Naive thymus-derived CD4-positive, alpha-beta T cell (primary cell): ENCODE measurements at regions of chr6 and their contacts with region 1.

Region 1: DNA sequence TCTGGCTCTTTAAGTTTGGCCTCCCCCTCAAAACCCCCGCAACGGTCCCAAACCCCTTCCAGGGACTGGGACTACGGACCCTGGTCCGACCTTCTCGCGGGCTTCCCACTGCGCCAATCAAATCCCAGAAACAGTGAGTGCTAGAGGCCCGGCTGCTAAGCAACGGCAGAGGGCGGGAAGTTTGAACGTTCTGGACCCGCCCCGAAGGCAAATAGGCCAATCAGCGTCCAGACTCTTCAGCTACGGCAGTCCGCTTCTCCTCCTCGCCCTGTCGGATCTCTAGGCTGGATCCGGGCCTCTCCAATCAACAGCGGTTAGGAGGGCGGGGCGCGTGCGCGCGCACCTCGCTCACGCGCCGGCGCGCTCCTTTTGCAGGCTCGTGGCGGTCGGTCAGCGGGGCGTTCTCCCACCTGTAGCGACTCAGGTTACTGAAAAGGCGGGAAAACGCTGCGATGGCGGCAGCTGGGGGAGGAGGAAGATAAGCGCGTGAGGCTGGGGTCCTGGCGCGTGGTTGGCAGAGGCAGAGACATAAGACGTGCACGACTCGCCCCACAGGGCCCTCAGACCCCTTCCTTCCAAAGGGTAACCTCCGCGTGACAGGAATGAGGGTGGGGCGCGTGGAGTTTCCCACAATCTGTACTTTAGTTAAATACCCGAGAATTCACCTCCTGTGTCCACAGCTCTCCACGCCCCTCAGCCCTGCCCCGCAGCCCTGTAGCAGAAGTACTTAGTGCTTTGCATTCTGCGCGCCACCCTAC is at the start of gene MSH5:
- DNase-seq: peak; percentile 82 to 97 (median 92)
- ATAC-seq: peak; percentile 93
- H3K4me3 ChIP-seq: peak within 1 kb of the TSS; percentile 68
- H3K4me3 Mint-ChIP-seq: peak within 1 kb of the TSS; percentile 86 to 100 (median 98)
- H3K27ac ChIP-seq: peak within 1 kb of the TSS; percentile 69
- H3K27ac Mint-ChIP-seq: peak within 1 kb of the TSS; percentile 83 to 94 (median 90)
- H3K4me1 ChIP-seq: peaks cover 32 to 33% of the 10 kb centered on the region in 2 donors
- H3K4me1 Mint-ChIP-seq: peaks cover 41 to 69% (median 61%) of the 10 kb centered on the region in 7 donors
- H3K27me3 ChIP-seq: no peaks in the 10 kb centered on the region
- H3K27me3 Mint-ChIP-seq: no peaks in the 10 kb centered on the region
- total RNA-seq, gene MSH5: 10.3 to 52.2 (median 11.4) TPM

Region 2: DNA sequence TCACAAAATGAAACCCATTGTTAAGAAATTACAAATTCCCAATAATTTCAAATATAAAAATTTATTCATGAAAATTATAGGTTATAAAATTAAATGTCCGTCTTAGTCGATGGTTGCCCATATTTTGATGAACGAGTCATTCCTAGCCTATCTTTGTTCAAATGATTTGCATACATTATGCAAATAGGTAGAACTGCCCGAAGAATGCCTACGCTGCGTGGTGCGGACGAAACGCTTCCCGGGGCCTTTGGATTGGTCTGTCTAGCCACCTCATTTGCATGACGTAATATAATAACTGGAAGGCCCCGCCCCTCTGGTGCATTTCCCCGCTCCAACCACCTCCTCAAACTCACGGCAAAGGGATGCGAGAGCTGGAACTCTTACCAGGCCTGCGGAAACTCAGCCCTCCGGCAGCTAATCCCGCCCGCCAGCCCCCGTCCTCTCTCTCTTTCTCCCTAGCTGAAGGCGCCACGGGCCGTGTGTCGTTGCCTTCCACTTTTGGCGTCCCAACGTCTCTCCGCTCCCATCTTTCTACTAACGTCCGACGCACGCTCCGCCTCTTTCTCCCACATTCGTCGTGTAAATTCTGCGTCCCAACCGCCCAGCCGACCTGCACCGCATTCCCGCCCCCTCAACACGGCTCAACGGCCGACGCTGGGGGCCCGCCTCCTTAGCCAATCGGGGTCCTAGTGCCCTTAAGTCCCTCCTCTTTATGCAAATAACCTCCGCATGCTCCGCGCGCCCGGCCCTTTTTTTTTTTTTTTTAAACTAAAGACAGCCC is 119.8 kb before region 1 on chr6:
- CTCF ChIA-PET with region 1: interaction called, 3 read pairs
- POLR2A ChIA-PET with region 1: interaction called, 3 read pairs
- intact Hi-C with region 1: loop called in 1 of 2 experiments (anchors 2 kb)
- DNase-seq: peak; percentile 81 to 97 (median 94)
- ATAC-seq: peak; percentile 88
- H3K4me3 ChIP-seq: peak overlapping the region; percentile 90
- H3K4me3 Mint-ChIP-seq: peak overlapping the region; percentile 87 to 97 (median 93)
- H3K27ac ChIP-seq: peak overlapping the region; percentile 96
- H3K27ac Mint-ChIP-seq: peak overlapping the region; percentile 95 to 99 (median 96)
- H3K4me1 ChIP-seq: peaks cover 14 to 23% of the 10 kb centered on the region in 2 donors
- H3K4me1 Mint-ChIP-seq: peaks cover 26 to 60% (median 53%) of the 10 kb centered on the region in 7 donors
- H3K27me3 ChIP-seq: no peaks in the 10 kb centered on the region
- H3K27me3 Mint-ChIP-seq: no peaks in the 10 kb centered on the region

Region 3: DNA sequence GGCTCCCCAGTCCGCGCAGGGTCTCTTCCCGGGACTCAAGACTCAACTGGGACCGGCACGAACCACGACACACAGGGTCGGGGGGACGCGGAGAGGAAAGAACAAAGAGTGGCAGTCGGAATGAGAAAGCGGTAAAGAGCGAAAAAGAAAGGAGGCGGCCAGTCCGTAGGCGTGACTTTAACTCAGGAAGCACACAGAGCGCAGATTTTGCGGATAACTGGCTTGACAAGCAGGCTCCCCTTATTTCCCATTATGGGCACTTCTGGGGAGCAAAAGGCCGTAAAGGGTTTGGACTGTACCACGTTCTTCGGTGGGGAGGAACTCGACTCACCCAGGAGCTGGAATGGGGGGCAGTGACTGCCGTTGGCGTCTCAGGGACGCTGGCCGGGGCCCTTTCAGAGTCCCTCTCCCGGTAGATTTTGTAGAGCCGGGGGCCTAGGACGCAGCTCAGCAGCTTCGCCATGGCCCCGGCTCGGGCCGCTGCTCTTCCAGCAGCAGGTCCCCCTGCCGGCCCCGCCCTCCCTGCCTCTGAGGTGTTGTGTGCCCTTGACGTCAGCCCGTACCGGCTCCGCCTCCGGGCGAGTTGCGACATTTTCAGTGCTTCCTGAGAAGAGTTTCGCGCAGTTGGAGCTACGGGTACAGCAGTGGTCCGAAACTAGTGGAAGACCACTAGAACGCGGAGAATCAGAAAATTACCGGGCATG is 36.8 kb before region 1 on chr6 and contains the start of gene ABHD16A:
- CTCF ChIA-PET with region 1: no interaction called
- POLR2A ChIA-PET with region 1: interaction called, 5 read pairs
- intact Hi-C with region 1: loop called (anchors 1 kb)
- DNase-seq: peak; percentile 93 to 97 (median 96)
- ATAC-seq: peak; percentile 95
- H3K4me3 ChIP-seq: peak within 1 kb of the TSS; percentile 98
- H3K4me3 Mint-ChIP-seq: peak within 1 kb of the TSS; percentile 92 to 100 (median 98)
- H3K27ac ChIP-seq: peak within 1 kb of the TSS; percentile 98
- H3K27ac Mint-ChIP-seq: peak within 1 kb of the TSS; percentile 95 to 98 (median 97)
- H3K4me1 ChIP-seq: peaks cover 21 to 28% of the 10 kb centered on the region in 2 donors
- H3K4me1 Mint-ChIP-seq: peaks cover 16 to 39% (median 31%) of the 10 kb centered on the region in 7 donors
- H3K27me3 ChIP-seq: no peaks in the 10 kb centered on the region
- H3K27me3 Mint-ChIP-seq: peaks cover 0 to 2% (median 0%) of the 10 kb centered on the region in 5 donors
- total RNA-seq, gene ABHD16A: 60.1 to 71.7 (median 65.2) TPM

Region 4: GRCh38 chr6:31795616-31796298 is 55.9 kb after region 1 on chr6 and contains the start of gene VARS1:
- CTCF ChIA-PET with region 1: interaction called, 11 read pairs
- POLR2A ChIA-PET with region 1: interaction called, 8 read pairs
- intact Hi-C with region 1: loop called (anchors 1 to 2 kb)
- DNase-seq: peak; percentile 75 to 92 (median 85)
- ATAC-seq: peak; percentile 96
- H3K4me3 ChIP-seq: peak within 1 kb of the TSS; percentile 76
- H3K4me3 Mint-ChIP-seq: peak within 1 kb of the TSS; percentile 85 to 99 (median 96)
- H3K27ac ChIP-seq: peak within 1 kb of the TSS; percentile 93
- H3K27ac Mint-ChIP-seq: peak within 1 kb of the TSS; percentile 80 to 99 (median 98)
- H3K4me1 ChIP-seq: peaks cover 24 to 32% of the 10 kb centered on the region in 2 donors
- H3K4me1 Mint-ChIP-seq: peaks cover 12 to 55% (median 36%) of the 10 kb centered on the region in 7 donors
- H3K27me3 ChIP-seq: no peaks in the 10 kb centered on the region
- H3K27me3 Mint-ChIP-seq: no peaks in the 10 kb centered on the region
- total RNA-seq, gene VARS1: 34.3 to 84.2 (median 53.2) TPM

Region 5: DNA sequence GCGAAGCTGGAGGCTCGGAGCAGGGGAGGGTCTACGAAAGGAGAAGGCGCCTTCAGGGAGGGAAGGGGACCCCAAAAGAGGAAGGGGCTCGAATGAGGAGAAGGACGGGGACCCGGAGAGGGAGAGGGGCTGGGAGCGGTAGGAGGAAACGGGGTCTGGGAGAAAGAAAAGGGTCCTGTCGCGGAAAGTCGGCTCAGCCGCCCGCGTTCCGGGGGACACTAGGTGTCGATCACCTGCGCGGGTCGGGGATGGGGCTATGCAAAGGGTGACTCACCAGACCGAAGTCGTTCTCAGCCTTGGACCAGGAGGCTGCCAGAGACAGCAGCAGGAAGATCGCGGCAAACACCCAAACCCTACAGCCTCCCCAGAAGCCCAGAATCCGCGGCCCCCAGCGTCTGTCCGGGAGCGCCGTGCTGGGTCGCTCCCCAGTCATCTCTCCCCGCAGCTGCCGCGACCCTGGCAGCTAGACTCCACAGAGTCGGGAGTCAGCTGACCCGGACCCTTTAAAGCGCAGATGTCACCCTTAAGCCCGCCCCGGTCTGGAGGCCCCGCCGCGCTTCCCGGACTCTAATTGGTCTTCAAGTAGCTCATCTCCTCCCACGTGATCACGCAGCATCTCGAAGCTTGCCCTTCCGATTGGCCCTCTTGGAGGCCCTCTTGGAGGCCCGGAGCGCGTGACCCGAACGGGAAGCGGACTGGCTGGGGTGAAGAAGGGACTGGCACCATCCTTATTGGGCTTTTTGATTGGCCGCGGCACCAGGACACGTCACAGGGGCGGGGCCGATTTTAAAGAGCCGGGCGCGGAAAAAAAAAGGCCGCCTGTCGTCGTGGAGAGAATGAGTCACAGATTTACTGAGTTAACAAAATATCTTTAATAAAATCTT is 122.8 kb after region 1 on chr6 and contains the start of gene NEU1:
- CTCF ChIA-PET with region 1: no interaction called
- POLR2A ChIA-PET with region 1: interaction called, 3 read pairs
- intact Hi-C with region 1: loop called in 1 of 2 experiments (anchors 1 kb)
- DNase-seq: peak; percentile 87 to 100 (median 99)
- ATAC-seq: peak; percentile 97
- H3K4me3 ChIP-seq: peak within 1 kb of the TSS; percentile 97
- H3K4me3 Mint-ChIP-seq: peak within 1 kb of the TSS; percentile 87 to 96 (median 93)
- H3K27ac ChIP-seq: peak within 1 kb of the TSS; percentile 86
- H3K27ac Mint-ChIP-seq: peak within 1 kb of the TSS; percentile 85 to 97 (median 93)
- H3K4me1 ChIP-seq: peaks cover 8 to 15% of the 10 kb centered on the region in 2 donors
- H3K4me1 Mint-ChIP-seq: peaks cover 14 to 29% (median 20%) of the 10 kb centered on the region in 7 donors
- H3K27me3 ChIP-seq: no peaks in the 10 kb centered on the region
- H3K27me3 Mint-ChIP-seq: peaks cover 0 to 2% (median 0%) of the 10 kb centered on the region in 5 donors
- total RNA-seq, gene NEU1: 18.6 to 35.0 (median 20.1) TPM

Region 6: DNA sequence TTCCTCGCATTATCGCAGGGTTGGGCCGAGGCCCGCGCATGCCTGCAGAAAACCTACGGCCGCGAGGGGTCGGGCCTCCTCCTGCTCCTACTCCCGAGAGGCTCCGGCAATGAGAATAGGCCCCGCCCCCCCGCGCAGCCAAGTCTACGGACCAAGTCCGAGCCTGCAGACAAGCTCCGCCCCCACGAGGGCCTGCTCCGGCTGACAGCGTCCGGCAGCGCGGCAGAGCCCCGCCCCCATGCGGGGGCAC is 455.8 kb after region 1 on chr6:
- CTCF ChIA-PET with region 1: no interaction called
- POLR2A ChIA-PET with region 1: no interaction called
- intact Hi-C with region 1: loop called in 1 of 2 experiments (anchors 5 kb)
- DNase-seq: peak; percentile 94 to 100 (median 98)
- ATAC-seq: peak; percentile 89
- H3K4me3 ChIP-seq: peak overlapping the region; percentile 98
- H3K4me3 Mint-ChIP-seq: peak overlapping the region; percentile 92 to 99 (median 97)
- H3K27ac ChIP-seq: peak overlapping the region; percentile 97
- H3K27ac Mint-ChIP-seq: peak overlapping the region; percentile 86 to 99 (median 97)
- H3K4me1 ChIP-seq: peaks cover 20 to 29% of the 10 kb centered on the region in 2 donors
- H3K4me1 Mint-ChIP-seq: peaks cover 24 to 40% (median 31%) of the 10 kb centered on the region in 7 donors
- H3K27me3 ChIP-seq: no peaks in the 10 kb centered on the region
- H3K27me3 Mint-ChIP-seq: no peaks in the 10 kb centered on the region